ENCODE measurements at regions of chr3 and their contacts with region 1.

Region 1: DNA sequence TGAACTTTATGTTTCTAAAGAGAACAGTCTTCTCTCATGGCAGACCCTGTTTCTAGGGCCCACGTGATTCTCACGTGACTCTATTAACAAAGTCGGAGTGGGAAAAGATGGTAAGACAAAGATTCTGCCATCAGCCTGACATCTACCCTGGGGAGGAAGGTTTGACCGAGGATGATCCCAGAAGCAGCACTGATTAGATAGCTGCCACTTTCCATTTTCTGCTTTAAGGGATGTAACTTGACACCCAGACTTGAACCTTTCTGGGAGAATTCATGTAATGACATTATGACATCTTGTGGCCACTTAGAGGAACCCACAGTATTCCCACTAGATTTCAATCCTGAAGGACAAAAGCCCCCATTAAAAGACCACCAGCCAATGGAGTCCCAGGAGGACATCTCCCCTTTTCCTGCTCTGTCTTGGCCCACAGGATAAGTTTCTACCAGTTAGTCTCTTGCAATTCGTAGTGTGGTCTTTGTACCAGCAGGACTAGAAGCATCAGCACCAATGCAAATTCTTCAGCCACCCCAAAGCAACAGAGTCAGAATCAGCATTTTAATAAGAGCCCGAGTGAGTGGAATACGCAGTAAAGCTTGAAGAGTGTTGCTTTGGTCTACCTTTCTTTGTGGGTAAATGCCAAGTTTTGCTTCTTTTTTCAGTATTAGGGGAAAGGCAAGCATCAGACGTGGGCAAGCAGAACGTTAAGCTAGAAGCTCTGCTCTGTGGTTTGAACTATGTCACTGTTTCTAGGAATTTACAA is 480.5 kb upstream of the PROK2 start:
- DNase-seq: no peak

Region 2: DNA sequence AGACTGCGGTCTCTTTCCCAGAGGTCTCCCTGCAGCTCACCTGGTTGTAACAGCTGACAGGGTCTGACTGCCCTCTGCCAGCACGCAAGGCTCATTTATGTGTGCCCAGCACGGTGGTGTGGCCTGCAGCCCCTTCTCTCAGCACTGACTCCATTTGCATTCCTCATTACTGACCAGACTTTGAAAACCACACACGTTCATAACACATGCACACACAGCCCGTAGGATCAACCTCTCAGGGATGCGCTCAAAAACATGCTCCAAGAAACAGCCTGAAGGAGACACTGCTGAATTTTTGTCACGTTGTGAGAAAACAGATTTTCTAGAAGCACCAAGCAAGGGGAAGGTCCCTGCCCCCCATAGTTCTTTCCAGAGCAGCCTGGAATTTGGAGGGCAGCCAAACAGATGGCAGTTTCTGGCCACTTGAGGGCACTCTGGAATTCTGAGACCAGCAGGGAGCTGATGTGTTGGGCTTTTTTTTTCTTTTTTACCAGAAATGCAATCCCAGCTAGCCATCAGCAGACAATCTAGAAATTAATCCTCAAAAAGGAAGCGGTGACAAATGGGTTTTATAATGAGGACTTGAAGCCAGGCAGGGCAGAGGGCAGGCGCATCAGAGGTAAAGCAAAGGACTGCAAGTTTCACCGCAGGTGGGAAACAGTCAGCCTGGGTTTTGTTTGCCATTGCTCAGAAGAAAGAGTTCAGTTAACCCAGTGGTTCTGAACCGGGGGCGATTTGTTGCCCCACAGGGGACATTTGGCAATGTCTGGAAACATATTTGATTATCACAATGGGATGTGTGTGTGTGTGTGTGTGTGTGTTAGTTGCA is 310.0 kb before region 1 on chr3:
- intact Hi-C with region 1: loop called in 1 of 2 experiments (anchors 10 kb)
- DNase-seq: peak; percentile 83

Region 3: DNA sequence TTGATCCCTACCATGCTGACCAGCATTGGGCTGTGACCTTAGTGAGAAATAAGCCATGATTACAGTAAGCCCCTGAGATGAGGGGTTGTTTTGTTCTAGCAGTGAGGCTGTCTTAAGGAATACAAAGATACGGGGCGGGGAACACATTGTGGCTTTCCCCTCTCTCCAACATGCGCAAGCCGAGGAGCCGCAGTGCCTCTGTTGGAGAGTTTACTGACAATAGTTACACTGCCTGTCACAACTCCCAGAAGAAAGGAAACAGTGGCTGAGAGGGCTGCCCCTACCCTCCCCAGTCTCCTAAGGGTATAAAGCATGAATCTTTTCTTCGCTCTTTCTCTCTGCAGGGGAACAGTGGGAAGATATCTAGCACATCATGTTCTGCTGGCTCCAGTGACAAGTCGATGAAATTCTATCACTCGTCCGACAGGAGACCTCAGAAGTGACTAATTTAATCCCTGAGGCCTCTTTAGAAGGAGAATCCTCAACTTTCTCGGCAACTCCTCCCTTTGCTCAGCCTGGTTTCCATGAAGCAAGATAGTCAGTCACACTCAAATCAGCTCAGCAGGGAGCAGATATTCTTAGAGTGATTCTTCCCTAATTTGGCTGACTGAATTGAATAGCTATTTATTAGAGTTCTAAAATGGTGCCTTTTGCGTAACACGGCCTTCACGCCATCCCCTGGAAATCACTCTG is 71.5 kb before region 1 on chr3:
- intact Hi-C with region 1: no loop called
- DNase-seq: no peak

Region 4: DNA sequence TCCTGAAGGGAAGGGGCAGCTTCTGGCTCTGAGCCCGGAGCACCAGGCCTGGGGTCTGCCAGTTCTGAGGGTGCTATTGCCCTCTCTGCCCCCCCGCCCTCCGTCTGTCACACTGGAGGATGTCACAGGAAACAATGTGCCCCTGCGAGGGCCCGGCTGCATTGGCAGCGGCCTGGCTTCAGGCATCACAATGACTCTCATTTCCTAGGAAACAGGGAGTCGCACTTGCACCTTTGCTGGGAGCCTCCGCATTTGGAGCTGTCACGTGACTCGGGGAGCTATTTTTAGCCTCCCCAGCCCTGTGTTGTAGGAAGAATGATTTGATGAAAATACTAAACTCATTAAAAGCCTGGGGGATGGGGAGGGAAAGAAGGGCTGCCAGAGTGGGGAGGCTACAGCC is 63.9 kb after region 1 on chr3:
- intact Hi-C with region 1: no loop called
- DNase-seq: no peak